ENCODE measurements at regions of chr1 and their contacts with region 1.

Region 1: GRCh38 chr1:206912445-206913095 is 9.2 kb downstream of the FCMR start:
- DNase-seq: peak; percentile 56 to 65
- H3K4me3 ChIP-seq: no peak overlapping the region
- H3K27ac ChIP-seq: no peak overlapping the region
- H3K4me1 ChIP-seq: peaks cover 7% of the 10 kb centered on the region
- H3K27me3 ChIP-seq: no peaks in the 10 kb centered on the region
- CTCF ChIP-seq: peak; percentile 83

Region 2: DNA sequence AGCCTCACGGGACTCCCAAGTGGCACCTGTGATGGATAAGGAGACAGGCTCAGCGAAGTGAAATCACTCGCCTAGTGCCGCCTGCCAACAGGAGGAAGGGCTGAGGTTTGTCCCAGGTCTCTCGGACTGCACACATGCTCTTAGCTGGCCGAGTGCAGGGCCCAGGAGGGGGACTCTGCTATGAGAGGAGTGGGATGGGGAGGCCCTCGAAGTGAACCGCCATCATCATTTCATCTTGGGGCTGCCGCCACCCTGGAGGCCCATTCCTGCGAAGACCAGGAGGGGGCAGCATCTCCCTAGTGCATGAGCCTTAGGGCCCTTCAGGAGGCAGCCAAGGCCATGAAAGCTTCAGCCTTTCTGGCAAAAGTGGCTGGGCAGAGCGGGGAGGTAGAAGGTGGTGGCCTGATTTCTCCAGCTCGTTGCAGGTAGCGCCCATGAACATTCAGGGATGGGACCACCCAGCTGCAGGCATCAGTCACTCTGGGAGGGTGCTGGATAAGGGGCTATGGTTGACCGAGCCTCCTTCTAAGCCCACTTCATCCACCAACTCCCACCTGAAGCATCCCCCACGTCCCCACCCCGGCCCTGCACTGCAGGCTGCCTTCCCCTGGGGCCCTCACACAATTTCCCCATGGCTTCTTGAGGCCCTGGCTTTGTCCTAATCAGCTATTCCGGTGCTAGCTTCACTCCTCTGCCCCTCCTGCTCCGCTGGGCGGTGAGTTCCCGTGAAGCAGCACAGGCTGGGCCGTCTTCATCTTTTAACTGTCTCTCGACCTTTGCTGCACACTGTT is 422.4 kb before region 1 on chr1:
- CTCF ChIA-PET with region 1: interaction called, 4 read pairs
- POLR2A ChIA-PET with region 1: no interaction called
- intact Hi-C with region 1: loop called (anchors 5 kb)
- DNase-seq: peak; percentile 51 to 71
- H3K4me3 ChIP-seq: no peak overlapping the region
- H3K27ac ChIP-seq: no peak overlapping the region
- H3K4me1 ChIP-seq: no peaks in the 10 kb centered on the region
- H3K27me3 ChIP-seq: no peaks in the 10 kb centered on the region
- CTCF ChIP-seq: peak; percentile 91

Region 3: GRCh38 chr1:206663832-206664652 is 248.5 kb before region 1 on chr1:
- CTCF ChIA-PET with region 1: interaction called, 3 read pairs
- POLR2A ChIA-PET with region 1: no interaction called
- intact Hi-C with region 1: loop called (anchors 2 kb)
- DNase-seq: peak in 1 of 2 experiments; percentile 59
- H3K4me3 ChIP-seq: no peak overlapping the region
- H3K27ac ChIP-seq: no peak overlapping the region
- H3K4me1 ChIP-seq: no peaks in the 10 kb centered on the region
- H3K27me3 ChIP-seq: 0 out of 2 replicates have a peak, but pooled peaks cover 8% of the 10 kb centered on the region
- CTCF ChIP-seq: peak; percentile 94

Region 4: DNA sequence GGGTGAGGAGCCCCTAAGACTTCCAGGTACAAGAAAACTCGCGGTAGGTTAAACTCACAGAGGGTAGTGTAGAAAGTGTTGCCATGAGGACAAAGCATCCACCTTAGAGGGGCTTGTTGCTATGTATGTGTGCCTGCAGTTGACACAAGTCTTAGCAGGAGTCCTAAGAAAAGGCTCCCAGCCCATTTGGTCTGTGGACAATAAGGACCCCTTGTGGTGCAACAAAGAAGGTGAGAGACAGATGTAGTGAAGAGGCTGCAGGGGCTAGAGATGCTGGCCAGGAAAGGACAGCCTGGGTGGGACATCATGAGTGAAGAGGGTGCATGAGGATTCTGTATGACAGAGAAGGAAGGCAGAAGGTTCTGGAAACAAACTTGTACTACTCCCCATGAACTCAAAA is 104.0 kb before region 1 on chr1:
- CTCF ChIA-PET with region 1: interaction called, 10 read pairs
- POLR2A ChIA-PET with region 1: no interaction called
- intact Hi-C with region 1: loop called (anchors 5 kb)
- DNase-seq: no peak
- H3K4me3 ChIP-seq: no peak overlapping the region
- H3K27ac ChIP-seq: no peak overlapping the region
- H3K4me1 ChIP-seq: no peaks in the 10 kb centered on the region
- H3K27me3 ChIP-seq: 0 out of 2 replicates have a peak, but pooled peaks cover 5% of the 10 kb centered on the region
- CTCF ChIP-seq: peak; percentile 37; the same call in 1 of the 2 replicates

Region 5: GRCh38 chr1:206851341-206852010 is 61.1 kb before region 1 on chr1:
- CTCF ChIA-PET with region 1: no interaction called
- POLR2A ChIA-PET with region 1: no interaction called
- intact Hi-C with region 1: no loop called
- DNase-seq: no peak
- H3K4me3 ChIP-seq: no peak overlapping the region
- H3K27ac ChIP-seq: no peak overlapping the region
- H3K4me1 ChIP-seq: no peaks in the 10 kb centered on the region
- H3K27me3 ChIP-seq: peaks cover 42% of the 10 kb centered on the region
- CTCF ChIP-seq: no peak

Region 6: GRCh38 chr1:206982216-206982615 is 69.6 kb after region 1 on chr1:
- CTCF ChIA-PET with region 1: interaction called, 4 read pairs
- POLR2A ChIA-PET with region 1: no interaction called
- intact Hi-C with region 1: loop called (anchors 2 kb)
- DNase-seq: peak; percentile 46 to 51
- H3K4me3 ChIP-seq: no peak overlapping the region
- H3K27ac ChIP-seq: no peak overlapping the region
- H3K4me1 ChIP-seq: no peaks in the 10 kb centered on the region
- H3K27me3 ChIP-seq: no peaks in the 10 kb centered on the region
- CTCF ChIP-seq: peak; percentile 85

Region 7: GRCh38 chr1:207404849-207405525 is 492.4 kb after region 1 on chr1:
- CTCF ChIA-PET with region 1: no interaction called
- POLR2A ChIA-PET with region 1: no interaction called
- intact Hi-C with region 1: loop called (anchors 5 kb)
- DNase-seq: peak in 1 of 2 experiments; percentile 76
- H3K4me3 ChIP-seq: no peak overlapping the region
- H3K27ac ChIP-seq: no peak overlapping the region
- H3K4me1 ChIP-seq: peaks cover 11% of the 10 kb centered on the region
- H3K27me3 ChIP-seq: no peaks in the 10 kb centered on the region
- CTCF ChIP-seq: peak; percentile 87

Measured in PC-9 (cell line).